ENCODE measurements at regions of chr1 and their contacts with region 1.

Region 1: DNA sequence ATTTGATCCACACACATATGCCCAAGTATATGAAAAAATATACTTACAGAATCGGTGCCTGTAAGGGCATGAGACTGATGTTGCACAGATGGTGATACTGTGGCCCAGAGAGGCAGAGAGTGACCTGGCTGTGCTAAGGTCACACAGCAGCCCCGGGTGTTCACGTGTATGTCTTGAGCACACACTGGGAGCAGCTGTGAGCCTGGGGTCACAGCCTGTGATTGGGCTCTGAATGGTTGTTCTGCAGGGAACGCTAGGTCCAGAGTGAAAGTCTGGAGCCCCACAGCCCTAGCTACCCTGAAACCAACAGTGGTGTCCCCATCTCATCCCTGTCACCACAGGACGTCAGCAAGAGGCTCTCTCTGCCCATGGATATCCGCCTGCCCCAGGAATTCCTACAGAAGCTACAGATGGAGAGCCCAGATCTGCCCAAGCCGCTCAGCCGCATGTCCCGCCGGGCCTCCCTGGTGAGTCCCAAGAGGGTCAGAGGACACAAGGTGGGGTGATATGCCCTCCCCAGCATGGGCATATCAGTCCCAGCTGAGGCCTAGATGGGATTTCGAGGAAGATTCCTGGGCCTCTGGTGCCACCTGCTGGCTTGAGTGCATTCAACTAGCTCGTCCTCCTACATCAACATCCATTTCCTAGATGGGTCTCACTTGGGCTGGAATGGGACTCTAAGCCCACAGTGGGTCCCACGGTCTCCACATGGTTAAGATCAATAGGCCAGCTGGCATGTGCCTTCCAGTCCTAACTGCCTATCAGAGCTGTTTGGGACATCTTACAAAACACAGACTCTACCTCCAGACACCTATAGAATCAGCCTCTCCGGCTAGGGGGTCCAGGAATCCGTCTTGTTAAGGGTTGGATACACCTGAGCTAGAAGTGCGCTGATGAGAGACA is 19.7 kb downstream of the CDK18 start:
- DNase-seq: peak; percentile 83
- H3K4me3 Mint-ChIP-seq: no peak overlapping the region
- H3K27ac Mint-ChIP-seq: no peak overlapping the region
- H3K4me1 Mint-ChIP-seq: no peaks in the 10 kb centered on the region
- H3K27me3 Mint-ChIP-seq: peaks cover 4% of the 10 kb centered on the region

Region 2: DNA sequence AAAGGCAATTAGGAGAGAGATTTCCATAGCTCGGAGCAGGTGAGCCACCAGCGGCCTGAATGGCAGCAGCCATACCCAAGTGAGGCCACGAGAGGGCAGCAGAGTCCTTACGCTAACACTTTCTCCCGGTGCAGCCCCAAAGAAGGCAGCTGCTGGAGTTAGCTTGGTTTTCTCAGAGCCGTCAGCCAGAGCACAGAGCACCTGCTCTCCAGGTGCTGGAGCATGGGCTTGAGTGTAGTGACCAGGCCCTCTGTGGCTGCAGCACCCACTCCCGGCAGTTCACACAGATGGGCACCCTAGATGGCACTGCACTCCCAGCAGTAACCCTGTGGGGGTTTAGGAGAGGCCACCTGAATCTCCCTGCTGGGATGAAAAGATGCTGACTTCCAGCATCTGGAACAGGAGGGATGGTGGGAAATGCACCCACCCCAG is 250.6 kb before region 1 on chr1:
- CTCF ChIA-PET with region 1: interaction called, 12 read pairs
- DNase-seq: peak; percentile 92
- H3K4me3 Mint-ChIP-seq: no peak overlapping the region
- H3K27ac Mint-ChIP-seq: peak overlapping the region; percentile 82
- H3K4me1 Mint-ChIP-seq: peaks cover 38% of the 10 kb centered on the region
- H3K27me3 Mint-ChIP-seq: peaks cover 26% of the 10 kb centered on the region

Region 3: DNA sequence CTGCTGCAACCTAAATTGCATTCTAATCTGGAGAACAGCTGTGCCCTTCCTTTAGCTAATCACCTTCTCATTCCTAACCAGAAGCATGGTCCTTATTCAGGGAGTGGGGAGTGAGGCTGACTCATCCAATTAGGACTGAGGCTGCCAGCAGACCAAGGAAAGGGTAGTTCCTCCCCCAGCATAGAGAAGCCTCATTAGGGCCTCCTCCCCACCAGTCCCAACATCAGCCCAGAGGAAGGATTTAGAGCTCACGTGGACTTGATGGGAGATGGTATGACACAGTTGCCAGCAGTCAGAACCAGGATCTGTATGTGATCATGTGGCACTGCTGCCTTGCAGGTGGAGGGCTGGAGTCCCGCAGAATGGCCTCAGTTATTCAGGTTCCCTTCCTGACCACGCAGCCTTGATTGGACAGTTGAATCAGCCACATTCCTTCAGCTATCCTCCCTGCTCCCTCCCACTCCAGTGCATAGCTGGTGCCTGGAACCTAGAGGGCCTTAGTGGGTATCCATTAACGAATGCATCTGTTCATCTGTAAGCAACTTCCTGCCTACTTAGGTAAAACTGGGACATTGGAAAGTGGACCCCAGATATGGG is 175.2 kb before region 1 on chr1:
- CTCF ChIA-PET with region 1: interaction called, 48 read pairs
- DNase-seq: no peak
- H3K4me3 Mint-ChIP-seq: no peak overlapping the region
- H3K27ac Mint-ChIP-seq: no peak overlapping the region
- H3K4me1 Mint-ChIP-seq: peaks cover 4% of the 10 kb centered on the region
- H3K27me3 Mint-ChIP-seq: peaks cover 75% of the 10 kb centered on the region

Region 4: GRCh38 chr1:205396967-205397616 is 127.0 kb before region 1 on chr1:
- CTCF ChIA-PET with region 1: interaction called, 64 read pairs
- DNase-seq: peak; percentile 27
- H3K4me3 Mint-ChIP-seq: no peak overlapping the region
- H3K27ac Mint-ChIP-seq: no peak overlapping the region
- H3K4me1 Mint-ChIP-seq: no peaks in the 10 kb centered on the region
- H3K27me3 Mint-ChIP-seq: peaks cover 48% of the 10 kb centered on the region

Region 5: GRCh38 chr1:205510308-205510950 is 13.7 kb before region 1 on chr1:
- CTCF ChIA-PET with region 1: interaction called, 21 read pairs
- DNase-seq: no peak
- H3K4me3 Mint-ChIP-seq: no peak overlapping the region
- H3K27ac Mint-ChIP-seq: no peak overlapping the region
- H3K4me1 Mint-ChIP-seq: peaks cover 2% of the 10 kb centered on the region
- H3K27me3 Mint-ChIP-seq: peaks cover 24% of the 10 kb centered on the region

Region 6: DNA sequence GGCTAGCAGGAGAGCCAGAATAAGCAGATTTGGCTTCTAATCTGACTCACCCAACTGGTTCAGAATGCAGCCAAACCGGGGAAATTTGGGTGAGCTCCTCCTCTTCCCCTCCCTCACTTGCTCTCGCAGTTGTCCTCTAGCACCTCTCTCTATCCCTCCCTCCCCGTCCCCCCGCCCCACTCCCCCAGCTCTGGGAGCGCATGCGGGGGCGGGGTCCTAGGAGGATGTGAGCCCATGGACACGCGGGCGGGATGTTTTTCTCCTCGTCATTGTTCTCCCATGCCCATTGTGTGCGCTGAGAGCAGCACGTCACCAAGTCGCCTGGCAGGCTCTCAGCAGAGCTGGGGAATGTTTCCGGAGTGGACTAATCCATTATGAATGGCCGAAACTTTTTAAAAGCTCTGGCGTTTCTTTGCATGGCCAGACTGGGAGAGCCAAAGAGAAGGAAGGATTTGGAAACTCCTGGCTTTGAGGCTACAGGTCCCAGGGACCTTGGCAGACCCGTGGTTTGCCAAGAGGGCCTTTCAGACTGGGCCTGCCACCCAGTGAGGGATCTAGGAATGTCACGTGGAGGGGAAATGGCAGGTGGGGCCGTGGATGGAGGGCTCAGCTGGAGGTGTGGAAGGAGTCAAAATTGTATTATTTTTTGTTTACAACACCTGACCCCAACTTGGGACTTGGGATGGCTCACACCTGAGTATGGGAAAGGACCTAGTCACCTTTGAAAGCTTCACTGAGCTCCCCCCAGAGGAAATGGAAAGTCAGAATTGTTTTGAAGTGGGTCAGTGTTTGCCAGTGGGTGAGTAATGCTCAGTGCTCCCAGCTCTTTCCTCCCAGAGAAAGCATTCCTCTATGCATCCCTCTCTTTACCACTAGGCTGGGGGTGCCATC is 19.5 kb after region 1 on chr1:
- CTCF ChIA-PET with region 1: interaction called, 12 read pairs
- DNase-seq: peak; percentile 39
- H3K4me3 Mint-ChIP-seq: no peak overlapping the region
- H3K27ac Mint-ChIP-seq: no peak overlapping the region
- H3K4me1 Mint-ChIP-seq: peaks cover 8% of the 10 kb centered on the region
- H3K27me3 Mint-ChIP-seq: peaks cover 91% of the 10 kb centered on the region

Measured in activated naive CD4-positive, alpha-beta T cell treated with anti-CD3 and anti-CD28 coated beads, Interleukin-2, amount 10 ng/mL, durations not matched to agents 7 days and 5 days (primary cell).